A673 (cell line): ENCODE measurements at regions of chr4 and their contacts with region 1.

Region 1: GRCh38 chr4:166724369-166724768 is 509.9 kb downstream of the SPOCK3 start:
- DNase-seq: no peak
- H3K4me3 ChIP-seq: no peak overlapping the region
- H3K27ac ChIP-seq: no peak overlapping the region
- H3K4me1 ChIP-seq: no peaks in the 10 kb centered on the region
- H3K27me3 ChIP-seq: no peaks in the 10 kb centered on the region
- CTCF ChIP-seq: no peak

Region 2: GRCh38 chr4:164997324-164997723 is 1727.0 kb before region 1 on chr4:
- CTCF ChIA-PET with region 1: interaction called, 16 read pairs
- POLR2A ChIA-PET with region 1: no interaction called
- intact Hi-C with region 1: no loop called
- DNase-seq: peak; percentile 45
- H3K4me3 ChIP-seq: no peak overlapping the region
- H3K27ac ChIP-seq: no peak overlapping the region
- H3K4me1 ChIP-seq: peaks cover 7% of the 10 kb centered on the region
- H3K27me3 ChIP-seq: no peaks in the 10 kb centered on the region
- CTCF ChIP-seq: peak; percentile 40; the same call in 1 of the 2 replicates

Region 3: DNA sequence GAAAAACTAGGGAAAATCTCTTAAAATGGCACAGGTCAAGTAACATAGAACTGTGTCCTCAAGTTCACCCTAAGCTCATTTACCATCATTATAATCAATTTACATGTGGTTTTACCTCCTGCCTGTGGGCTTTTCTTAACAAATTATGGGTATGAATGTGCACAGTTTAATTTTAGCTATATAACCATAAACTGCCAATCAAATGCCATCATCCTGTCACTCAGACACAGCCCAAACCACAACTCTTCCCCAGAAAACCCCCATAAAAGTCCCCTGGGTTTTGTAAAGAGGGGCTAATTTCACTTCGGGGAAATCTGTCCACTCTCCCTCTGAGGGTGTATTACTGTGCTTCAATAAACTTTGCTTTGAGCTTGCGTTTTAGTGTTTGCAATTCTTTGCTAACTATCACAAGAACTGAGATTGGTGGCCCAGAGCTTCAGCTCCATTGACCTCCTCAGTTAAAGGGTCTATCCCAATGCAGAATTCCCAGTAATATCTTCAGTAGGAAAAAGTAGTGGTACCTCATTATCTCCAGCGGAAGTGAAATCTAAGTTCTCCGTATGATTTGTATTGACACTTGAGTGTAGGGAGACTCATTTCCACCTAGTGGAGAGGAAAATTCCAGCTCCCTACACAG is 115.4 kb after region 1 on chr4:
- CTCF ChIA-PET with region 1: no interaction called
- POLR2A ChIA-PET with region 1: no interaction called
- intact Hi-C with region 1: no loop called
- DNase-seq: no peak
- H3K4me3 ChIP-seq: no peak overlapping the region
- H3K27ac ChIP-seq: no peak overlapping the region
- H3K4me1 ChIP-seq: no peaks in the 10 kb centered on the region
- H3K27me3 ChIP-seq: no peaks in the 10 kb centered on the region
- CTCF ChIP-seq: no peak